ENCODE measurements at regions of chr7 and their contacts with region 1.

Region 1: GRCh38 chr7:47039904-47040303 is 542.0 kb downstream of the TNS3 start:
- DNase-seq: peak in 1 of 2 donors; percentile 69
- ATAC-seq: peak; percentile 74 to 92 (median 87)
- H3K4me3 ChIP-seq: no peak overlapping the region
- H3K27ac ChIP-seq: peak overlapping the region; percentile 45 to 88 (median 78)
- H3K4me1 ChIP-seq: peaks cover 17 to 77% (median 49%) of the 10 kb centered on the region in 9 donors
- H3K27me3 ChIP-seq: no peaks in the 10 kb centered on the region
- CTCF ChIP-seq: no peak

Region 2: DNA sequence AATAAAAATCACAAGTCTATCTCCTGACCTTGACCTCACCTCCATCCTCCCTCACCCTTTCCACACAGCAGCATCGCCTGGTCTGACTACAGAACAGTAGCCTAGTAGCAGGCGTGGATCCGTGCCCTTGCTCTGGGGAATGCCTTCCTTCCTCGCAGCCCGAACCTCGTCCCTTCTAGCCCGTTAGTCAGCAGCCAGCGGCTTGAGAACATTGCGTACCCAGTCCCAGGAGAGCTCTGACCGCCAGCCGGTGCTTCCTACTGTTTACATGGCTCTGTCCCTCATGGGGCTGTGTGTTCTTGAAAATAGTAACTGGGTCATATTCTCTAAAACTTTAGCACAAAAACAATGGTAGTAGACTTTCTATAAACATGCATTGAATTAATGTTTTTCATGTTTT is 436.1 kb before region 1 on chr7:
- intact Hi-C with region 1: loop called in 1 of 10 experiments (anchors 5 kb)
- DNase-seq: peak; percentile 87
- ATAC-seq: peak; percentile 81 to 98 (median 95)
- H3K4me3 ChIP-seq: no peak overlapping the region
- H3K27ac ChIP-seq: peak overlapping the region; percentile 38 to 89 (median 76)
- H3K4me1 ChIP-seq: peaks cover 15 to 43% (median 23%) of the 10 kb centered on the region in 9 donors
- H3K27me3 ChIP-seq: no peaks in the 10 kb centered on the region
- CTCF ChIP-seq: no peak

Region 3: DNA sequence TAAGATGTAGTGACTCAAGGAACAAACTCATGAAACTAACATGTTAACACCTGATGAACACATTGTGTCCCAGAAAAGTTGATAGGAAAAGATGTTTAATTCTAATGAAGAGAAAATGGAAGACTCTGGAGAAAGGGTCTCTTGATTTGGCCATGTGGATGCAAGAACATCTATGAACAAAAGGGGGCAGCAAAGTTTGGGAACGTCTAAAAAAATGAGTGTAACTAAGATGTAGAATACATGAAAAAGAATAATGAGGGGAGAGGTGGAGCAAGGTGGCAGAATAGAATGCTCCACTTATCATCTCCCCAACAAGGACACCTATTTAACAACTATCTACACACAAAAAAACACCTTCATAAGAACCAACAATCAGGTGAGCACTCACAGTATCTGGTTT is 263.1 kb before region 1 on chr7:
- intact Hi-C with region 1: loop called in 1 of 10 experiments (anchors 10 kb)
- DNase-seq: no peak
- ATAC-seq: no peak
- H3K4me3 ChIP-seq: no peak overlapping the region
- H3K27ac ChIP-seq: no peak overlapping the region
- H3K4me1 ChIP-seq: peaks cover 0 to 35% (median 18%) of the 10 kb centered on the region in 9 donors
- H3K27me3 ChIP-seq: no peaks in the 10 kb centered on the region
- CTCF ChIP-seq: peak; percentile 8 to 68 (median 47)

Region 4: GRCh38 chr7:46945328-46945727 is 94.6 kb before region 1 on chr7:
- intact Hi-C with region 1: loop called in 1 of 10 experiments (anchors 10 kb)
- DNase-seq: no peak
- ATAC-seq: no peak
- H3K4me3 ChIP-seq: no peak overlapping the region
- H3K27ac ChIP-seq: no peak overlapping the region
- H3K4me1 ChIP-seq: peaks cover 0 to 11% (median 0%) of the 10 kb centered on the region in 9 donors
- H3K27me3 ChIP-seq: no peaks in the 10 kb centered on the region
- CTCF ChIP-seq: no peak

Region 5: GRCh38 chr7:46982928-46983327 is 57.0 kb before region 1 on chr7:
- intact Hi-C with region 1: no loop called
- DNase-seq: no peak
- ATAC-seq: no peak
- H3K4me3 ChIP-seq: no peak overlapping the region
- H3K27ac ChIP-seq: no peak overlapping the region
- H3K4me1 ChIP-seq: no peaks in the 10 kb centered on the region
- H3K27me3 ChIP-seq: no peaks in the 10 kb centered on the region
- CTCF ChIP-seq: no peak

Measured in heart right ventricle (tissue), 16 donors.